ENCODE measurements at regions of chr17 and their contacts with region 1.

Region 1: GRCh38 chr17:78140169-78140976 is 5.8 kb upstream of the C17orf99 start:
- DNase-seq: peak; percentile 96
- H3K4me3 Mint-ChIP-seq: peak overlapping the region; percentile 28
- H3K27ac Mint-ChIP-seq: peak overlapping the region; percentile 77
- H3K4me1 Mint-ChIP-seq: peaks cover 40% of the 10 kb centered on the region
- H3K27me3 Mint-ChIP-seq: no peaks in the 10 kb centered on the region

Region 2: DNA sequence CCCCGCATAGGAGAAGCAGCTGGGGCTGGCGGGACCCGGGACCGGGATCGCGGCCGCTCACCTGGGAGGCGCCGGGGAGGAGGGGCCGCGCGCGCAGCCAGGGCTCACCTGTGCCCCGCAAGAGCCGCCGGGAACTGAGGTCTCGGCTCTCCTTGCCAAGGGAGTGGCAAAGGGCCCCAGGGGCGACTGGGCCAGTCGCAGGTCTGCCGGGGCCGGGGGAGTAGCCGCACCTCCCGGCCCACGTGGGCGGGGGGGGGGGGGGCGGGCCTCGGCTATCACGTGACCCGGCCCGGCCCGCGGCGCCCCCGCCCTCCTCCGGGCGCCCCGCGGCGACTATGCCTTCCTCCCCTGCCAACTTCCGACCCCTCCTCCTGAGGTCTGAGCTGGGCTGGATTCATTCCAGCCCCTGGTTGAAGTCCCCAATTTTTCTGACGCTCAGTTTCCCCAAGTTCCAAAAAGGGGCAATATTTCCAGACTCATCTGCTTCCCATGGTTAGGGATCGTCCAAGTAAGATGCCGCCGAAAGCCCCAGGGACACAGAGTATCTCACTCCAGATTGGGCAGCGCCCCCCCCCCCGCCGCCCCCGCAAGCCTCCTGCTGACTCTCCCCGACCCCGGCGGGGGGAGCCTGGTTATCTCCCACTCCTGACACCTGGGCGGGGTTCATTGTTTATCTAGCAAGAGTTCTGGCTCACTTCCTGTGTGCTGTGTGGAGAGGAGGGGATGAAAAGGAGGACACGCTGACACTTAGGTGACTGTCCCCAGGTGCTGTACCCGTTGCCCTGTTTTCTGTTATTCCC is 11.6 kb before region 1 on chr17 and contains the start of gene TMC6:
- intact Hi-C with region 1: loop called (anchors 1 kb)
- DNase-seq: peak; percentile 56
- H3K4me3 Mint-ChIP-seq: peak within 1 kb of the TSS; percentile 98
- H3K27ac Mint-ChIP-seq: peak within 1 kb of the TSS; percentile 99
- H3K4me1 Mint-ChIP-seq: peaks cover 44% of the 10 kb centered on the region
- H3K27me3 Mint-ChIP-seq: no peaks in the 10 kb centered on the region
- total RNA-seq, gene TMC6: 265 and 268 TPM in 2 replicates

Region 3: GRCh38 chr17:78168242-78168902 is 28.0 kb after region 1 on chr17 and contains the start of gene SYNGR2:
- intact Hi-C with region 1: loop called (anchors 1 kb)
- DNase-seq: peak; percentile 88
- H3K4me3 Mint-ChIP-seq: peak within 1 kb of the TSS; percentile 77
- H3K27ac Mint-ChIP-seq: peak within 1 kb of the TSS; percentile 65
- H3K4me1 Mint-ChIP-seq: peaks cover 28% of the 10 kb centered on the region
- H3K27me3 Mint-ChIP-seq: peaks cover 2% of the 10 kb centered on the region
- total RNA-seq, gene SYNGR2: 131 and 133 TPM in 2 replicates

Region 4: DNA sequence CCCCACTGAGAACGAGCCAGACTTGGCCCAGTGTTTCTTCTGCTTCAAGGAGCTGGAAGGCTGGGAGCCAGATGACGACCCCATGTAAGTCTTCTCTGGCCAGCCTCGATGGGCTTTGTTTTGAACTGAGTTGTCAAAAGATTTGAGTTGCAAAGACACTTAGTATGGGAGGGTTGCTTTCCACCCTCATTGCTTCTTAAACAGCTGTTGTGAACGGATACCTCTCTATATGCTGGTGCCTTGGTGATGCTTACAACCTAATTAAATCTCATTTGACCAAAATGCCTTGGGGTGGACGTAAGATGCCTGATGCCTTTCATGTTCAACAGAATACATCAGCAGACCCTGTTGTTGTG is 74.3 kb after region 1 on chr17:
- intact Hi-C with region 1: loop called (anchors 1 kb)
- DNase-seq: no peak
- H3K4me3 Mint-ChIP-seq: peak overlapping the region; percentile 96
- H3K27ac Mint-ChIP-seq: peak overlapping the region; percentile 91
- H3K4me1 Mint-ChIP-seq: peaks cover 15% of the 10 kb centered on the region
- H3K27me3 Mint-ChIP-seq: peaks cover 2% of the 10 kb centered on the region

Measured in activated T-helper 1 cell treated with anti-CD3 and anti-CD28 coated beads, Interleukin-12 subunit alpha, Interleukin-12 subunit beta, Interleukin-2, Interleukin-4 antibody, amounts not matched to agents 30 ng/mL and 10 ng/mL and 1 ng/mL, durations not matched to agents 14 hours and 24 hours and 36 hours (primary cell).